Heart left ventricle (tissue), 16 donors: ENCODE measurements at regions of chr2 and their contacts with region 1.

Region 1: GRCh38 chr2:46164581-46165301 is 132.5 kb upstream of the EPAS1 start:
- DNase-seq: peak in 4 of 5 donors; percentile 82 to 89 (median 86)
- ATAC-seq: peak; percentile 91 to 96 (median 92)
- H3K4me3 ChIP-seq: no peak overlapping the region
- H3K27ac ChIP-seq: peak overlapping the region; percentile 38 to 80 (median 66)
- H3K4me1 ChIP-seq: peaks cover 5 to 43% (median 32%) of the 10 kb centered on the region in 12 donors
- H3K27me3 ChIP-seq: no peaks in the 10 kb centered on the region
- CTCF ChIP-seq: no peak
- POLR2A ChIP-seq: no peak

Region 2: DNA sequence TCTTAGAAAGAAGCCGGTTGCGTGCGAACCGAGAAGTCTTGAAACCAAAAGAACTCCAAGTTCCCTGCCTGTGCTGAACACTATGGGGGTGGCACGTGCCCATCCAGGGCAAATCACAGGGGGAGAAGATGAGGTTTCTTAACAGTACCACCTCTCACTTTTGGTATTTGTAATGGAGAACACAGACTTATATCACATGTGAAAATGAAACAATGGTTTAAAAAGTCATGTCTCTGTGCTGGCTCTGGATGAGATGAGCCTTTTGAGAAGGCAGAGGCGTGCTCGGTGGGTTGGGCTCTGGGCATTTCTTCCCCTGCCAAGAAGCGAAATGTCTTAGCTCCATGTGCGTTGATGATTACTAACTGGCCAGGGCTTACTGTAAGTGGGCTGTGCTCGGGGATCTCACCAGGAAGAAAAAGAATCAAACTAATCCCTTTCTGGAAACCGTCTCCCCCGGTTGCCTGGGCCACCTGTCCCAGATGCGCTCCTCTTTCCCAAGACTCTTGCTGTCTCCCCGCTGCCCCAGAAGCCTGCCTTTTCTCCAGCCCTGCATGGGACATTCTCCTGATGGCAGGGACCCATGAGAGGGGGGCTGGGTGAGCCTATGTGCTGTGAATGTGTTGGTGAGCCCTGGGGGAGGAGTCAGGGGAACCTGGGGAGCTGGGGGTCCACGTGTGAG is 260.3 kb before region 1 on chr2:
- intact Hi-C with region 1: no loop called
- DNase-seq: no peak
- ATAC-seq: no peak
- H3K4me3 ChIP-seq: no peak overlapping the region
- H3K27ac ChIP-seq: no peak overlapping the region
- H3K4me1 ChIP-seq: peaks cover 0 to 33% (median 7%) of the 10 kb centered on the region in 12 donors
- H3K27me3 ChIP-seq: no peaks in the 10 kb centered on the region
- CTCF ChIP-seq: no peak
- POLR2A ChIP-seq: no peak

Region 3: DNA sequence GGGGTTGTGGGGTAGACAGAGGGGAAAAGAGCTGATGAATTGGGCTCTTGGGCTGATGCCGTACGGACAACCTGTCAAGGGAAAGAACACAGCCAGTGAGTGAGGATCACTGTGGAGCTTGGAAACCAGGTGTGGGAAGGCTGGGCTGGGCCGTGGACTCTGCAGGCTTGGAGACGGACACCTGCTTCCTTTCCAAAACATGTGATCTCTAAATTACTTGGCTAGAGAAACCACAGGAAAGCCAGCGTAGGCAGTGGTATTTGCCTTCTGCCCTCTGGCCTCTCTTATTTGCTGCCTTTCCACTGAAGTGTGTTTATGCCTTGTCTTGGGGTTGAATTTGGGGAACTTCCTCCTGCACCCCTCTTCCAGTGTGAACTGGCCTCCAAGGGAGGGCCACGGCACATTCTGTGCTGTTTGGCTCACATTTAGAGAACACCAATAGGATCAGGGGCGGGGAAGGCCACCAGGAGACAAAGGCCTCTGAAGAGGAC is 245.5 kb before region 1 on chr2:
- intact Hi-C with region 1: no loop called
- DNase-seq: no peak
- ATAC-seq: peak in 2 of 4 donors; percentile 10 to 31
- H3K4me3 ChIP-seq: no peak overlapping the region
- H3K27ac ChIP-seq: peak overlapping the region in 1 of 12 donors; percentile 13
- H3K4me1 ChIP-seq: peaks cover 0 to 47% (median 23%) of the 10 kb centered on the region in 12 donors
- H3K27me3 ChIP-seq: no peaks in the 10 kb centered on the region
- CTCF ChIP-seq: no peak
- POLR2A ChIP-seq: no peak

Region 4: GRCh38 chr2:46122318-46122976 is 42.3 kb before region 1 on chr2:
- intact Hi-C with region 1: loop called in 2 of 10 experiments (anchors 5 kb)
- DNase-seq: no peak
- ATAC-seq: no peak
- H3K4me3 ChIP-seq: no peak overlapping the region
- H3K27ac ChIP-seq: peak overlapping the region in 3 of 12 donors; percentile 22 to 90 (median 72)
- H3K4me1 ChIP-seq: peaks cover 4 to 60% (median 46%) of the 10 kb centered on the region in 12 donors
- H3K27me3 ChIP-seq: no peaks in the 10 kb centered on the region
- CTCF ChIP-seq: no peak
- POLR2A ChIP-seq: no peak